Heart right ventricle (tissue), 16 donors: ENCODE measurements at regions of chr3 and their contacts with region 1.

Region 1: GRCh38 chr3:14124615-14125190 is at the starts of genes CHCHD4 and TMEM43:
- DNase-seq: peak; percentile 99
- ATAC-seq: peak; percentile 91 to 97 (median 95)
- H3K4me3 ChIP-seq: peak within 1 kb of the TSS; percentile 68 to 98 (median 81)
- H3K27ac ChIP-seq: peak within 1 kb of the TSS; percentile 78 to 97 (median 93)
- H3K4me1 ChIP-seq: peaks cover 7 to 47% (median 41%) of the 10 kb centered on the region in 9 donors
- H3K27me3 ChIP-seq: no peaks in the 10 kb centered on the region
- CTCF ChIP-seq: no peak
- total RNA-seq, gene CHCHD4: 18.0 to 37.2 (median 28.0) TPM
- total RNA-seq, gene TMEM43: 23.9 to 47.4 (median 37.2) TPM

Region 2: DNA sequence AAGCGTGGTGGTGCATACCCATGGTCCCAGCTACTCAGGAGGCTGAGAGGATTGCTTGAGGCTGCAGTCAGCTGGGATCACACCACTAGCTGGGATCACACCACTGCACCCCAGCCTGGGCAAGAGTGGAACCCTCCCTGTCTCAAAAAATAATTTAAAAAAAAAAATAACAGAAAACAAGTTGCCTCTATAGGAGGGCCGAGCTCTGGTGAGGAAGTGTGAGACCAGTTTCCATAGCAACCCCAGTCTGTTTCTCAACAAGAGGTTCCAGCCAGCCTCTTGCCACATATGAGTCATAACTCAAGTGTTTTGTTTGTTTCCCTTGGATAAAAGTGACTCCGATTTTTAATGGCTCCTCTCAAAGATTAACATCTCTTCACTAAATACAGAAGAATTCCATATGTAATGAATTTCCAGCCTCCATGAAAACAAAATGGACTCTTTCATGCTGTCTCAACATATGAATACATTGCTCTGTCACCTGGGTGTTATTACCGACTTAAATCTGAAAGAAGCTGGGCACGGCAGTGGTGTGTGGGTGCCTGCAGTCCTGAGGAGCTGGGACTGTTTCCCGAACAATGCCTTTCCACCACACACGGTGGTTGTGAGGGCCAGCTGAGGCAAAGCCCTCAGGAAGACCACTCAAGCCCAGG is 19.8 kb after region 1 on chr3:
- intact Hi-C with region 1: loop called in 1 of 10 experiments (anchors 1 kb)
- DNase-seq: peak; percentile 43 to 88
- ATAC-seq: peak; percentile 65 to 92 (median 88)
- H3K4me3 ChIP-seq: peak overlapping the region in 6 of 10 donors; percentile 10 to 40 (median 29)
- H3K27ac ChIP-seq: peak overlapping the region; percentile 33 to 93 (median 84)
- H3K4me1 ChIP-seq: peaks cover 14 to 71% (median 37%) of the 10 kb centered on the region in 9 donors
- H3K27me3 ChIP-seq: no peaks in the 10 kb centered on the region
- CTCF ChIP-seq: no peak

Region 3: DNA sequence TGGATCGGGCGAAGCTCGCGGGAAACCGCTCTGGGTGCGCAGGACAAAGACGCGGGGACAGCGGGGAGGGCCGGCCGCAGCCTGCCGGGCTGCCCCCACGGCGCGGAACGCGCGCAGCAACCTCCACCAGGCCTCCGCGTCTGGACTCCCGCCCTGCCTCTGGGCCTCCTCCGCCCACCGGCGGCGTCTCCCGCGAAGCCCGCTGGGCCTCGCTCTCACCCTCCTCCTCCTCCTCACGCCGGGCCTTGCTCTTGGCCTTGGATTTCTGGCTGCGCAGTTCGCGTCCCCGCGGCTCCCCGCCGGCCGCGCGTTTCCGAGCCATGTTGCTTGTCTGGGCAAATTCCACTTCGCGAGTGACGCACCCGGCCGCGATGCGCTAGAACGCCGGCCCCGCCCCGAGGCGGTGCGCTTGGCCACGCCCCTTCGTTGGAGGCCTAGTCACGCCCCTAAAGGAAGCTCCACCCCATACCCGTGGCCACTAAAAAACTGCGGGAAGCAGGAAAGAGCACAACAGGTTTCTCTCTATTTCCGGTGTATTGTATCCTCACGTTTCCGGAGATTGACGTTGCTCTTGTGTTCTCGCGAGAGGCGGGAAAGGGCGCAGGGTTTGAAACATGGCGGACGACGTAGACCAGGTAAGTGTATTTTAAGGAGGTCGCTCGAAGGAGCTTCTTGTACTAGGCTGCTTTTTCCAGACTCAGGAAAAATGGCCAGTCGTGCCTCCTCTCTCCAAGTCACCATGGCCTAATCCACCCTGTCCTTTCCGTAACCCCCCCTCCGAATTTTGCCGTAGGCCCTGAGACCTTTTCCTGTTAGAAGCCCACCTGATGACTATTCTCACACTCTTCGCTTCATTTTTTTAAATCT is 53.8 kb after region 1 on chr3 and contains the starts of genes LSM3 and XPC:
- intact Hi-C with region 1: loop called in 7 of 10 experiments (anchors 1 to 5 kb)
- DNase-seq: peak; percentile 97
- ATAC-seq: peak; percentile 99 to 100 (median 100)
- H3K4me3 ChIP-seq: peak within 1 kb of the TSS; percentile 54 to 87 (median 75)
- H3K27ac ChIP-seq: peak within 1 kb of the TSS; percentile 81 to 97 (median 94)
- H3K4me1 ChIP-seq: peaks cover 5 to 50% (median 29%) of the 10 kb centered on the region in 9 donors
- H3K27me3 ChIP-seq: no peaks in the 10 kb centered on the region
- CTCF ChIP-seq: no peak
- total RNA-seq, gene LSM3: 12.4 to 18.0 (median 15.2) TPM
- total RNA-seq, gene XPC: 8.5 to 15.8 (median 11.3) TPM

Region 4: DNA sequence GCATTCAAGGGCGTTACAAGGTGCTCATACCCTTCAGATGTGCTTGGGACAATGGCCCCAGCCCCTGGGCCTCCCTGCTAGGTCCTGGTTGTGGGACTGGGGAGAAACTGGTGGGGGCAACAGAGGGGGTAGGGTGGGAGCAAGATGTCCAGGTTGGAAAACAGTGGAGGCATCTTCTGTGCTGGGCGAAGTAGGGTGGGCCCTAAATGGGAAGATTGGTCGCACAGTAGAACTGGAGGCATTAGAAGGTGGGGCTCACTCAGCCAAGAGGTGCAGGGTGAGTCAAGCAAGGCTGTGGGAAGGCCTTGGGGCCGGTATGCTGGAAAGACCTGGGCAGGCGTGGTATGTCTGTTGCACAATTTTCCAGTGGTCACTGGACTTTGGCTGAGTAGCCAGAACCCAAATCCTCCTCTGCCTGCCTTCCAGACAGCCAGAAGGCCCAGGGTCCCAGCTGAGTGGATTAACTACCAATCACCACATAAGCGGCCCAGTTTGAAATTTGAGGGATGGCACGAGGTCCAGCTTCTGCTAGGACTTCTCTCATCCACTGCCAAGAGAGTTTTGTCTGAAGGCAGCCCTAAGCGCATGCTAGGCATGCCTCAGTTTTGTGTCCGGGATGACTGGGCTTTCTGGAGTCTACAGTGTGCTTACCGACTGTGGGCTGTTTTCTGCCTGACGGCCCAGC is 128.5 kb after region 1 on chr3:
- intact Hi-C with region 1: no loop called
- DNase-seq: no peak
- ATAC-seq: peak in 2 of 8 donors; percentile 28 to 34
- H3K4me3 ChIP-seq: no peak overlapping the region
- H3K27ac ChIP-seq: no peak overlapping the region
- H3K4me1 ChIP-seq: peaks cover 0 to 14% (median 0%) of the 10 kb centered on the region in 9 donors
- H3K27me3 ChIP-seq: peaks cover 0 to 15% (median 2%) of the 10 kb centered on the region in 7 donors
- CTCF ChIP-seq: no peak